Psoas muscle (tissue), 8 donors: ENCODE measurements at regions of chr6 and their contacts with region 1.

Region 1: DNA sequence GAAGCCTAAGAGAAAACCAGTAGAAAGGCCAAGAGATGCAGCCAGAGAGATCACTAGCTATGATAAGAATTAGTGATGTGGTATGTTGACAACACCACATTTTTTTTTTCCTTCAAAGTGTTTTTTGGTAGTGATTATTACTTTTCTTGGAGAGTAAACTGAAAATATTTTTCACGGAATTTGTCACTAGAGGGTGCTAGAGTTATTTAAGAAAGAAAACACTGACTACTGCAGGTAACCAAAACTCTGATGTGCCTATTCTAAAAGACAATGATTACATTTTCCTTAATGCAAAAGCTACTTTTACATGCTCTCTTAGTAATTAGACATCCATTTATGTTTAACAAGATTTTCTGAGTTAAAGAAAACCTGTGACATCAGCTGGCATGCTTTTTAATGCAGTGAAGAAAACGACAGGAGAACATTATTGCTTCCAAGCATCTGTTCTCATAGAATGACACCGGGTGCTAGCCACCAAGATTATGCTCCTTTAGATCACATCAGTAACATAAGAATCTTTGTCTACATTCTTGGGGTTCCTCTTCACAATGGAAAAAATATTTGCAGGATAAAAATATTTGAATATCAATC is 28.8 kb downstream of the RWDD2A start:
- DNase-seq: no peak
- ATAC-seq: peak in 1 of 4 donors; percentile 53
- H3K4me3 ChIP-seq: no peak overlapping the region
- H3K27ac ChIP-seq: no peak overlapping the region
- H3K4me1 ChIP-seq: no peaks in the 10 kb centered on the region
- H3K27me3 ChIP-seq: no peaks in the 10 kb centered on the region
- CTCF ChIP-seq: peak; percentile 54

Region 2: GRCh38 chr6:83252717-83253116 is 30.7 kb after region 1 on chr6:
- intact Hi-C with region 1: loop called in 1 of 2 experiments (anchors 1 kb)
- DNase-seq: no peak
- ATAC-seq: no peak
- H3K4me3 ChIP-seq: no peak overlapping the region
- H3K27ac ChIP-seq: no peak overlapping the region
- H3K4me1 ChIP-seq: no peaks in the 10 kb centered on the region
- H3K27me3 ChIP-seq: no peaks in the 10 kb centered on the region
- CTCF ChIP-seq: no peak

Region 3: GRCh38 chr6:83514866-83515466 is 293.0 kb after region 1 on chr6:
- intact Hi-C with region 1: loop called (anchors 2 to 5 kb)
- DNase-seq: no peak
- ATAC-seq: peak in 2 of 4 donors; percentile 41 to 75
- H3K4me3 ChIP-seq: no peak overlapping the region
- H3K27ac ChIP-seq: no peak overlapping the region
- H3K4me1 ChIP-seq: peaks cover 4% of the 10 kb centered on the region
- H3K27me3 ChIP-seq: no peaks in the 10 kb centered on the region
- CTCF ChIP-seq: peak; percentile 85